ENCODE measurements at regions of chr12 and their contacts with region 1.

Region 1: GRCh38 chr12:122526683-122527477 is at the starts of genes KNTC1 and RSRC2:
- DNase-seq: peak; percentile 99
- ATAC-seq: peak; percentile 92
- H3K4me3 ChIP-seq: peak within 1 kb of the TSS; percentile 69 to 99 (median 97)
- H3K4me3 Mint-ChIP-seq: no peak within 1 kb of the TSS
- H3K27ac ChIP-seq: peak within 1 kb of the TSS; percentile 90 to 97
- H3K27ac Mint-ChIP-seq: no peak within 1 kb of the TSS
- H3K4me1 ChIP-seq: peaks cover 42% of the 10 kb centered on the region in 2 donors
- H3K4me1 Mint-ChIP-seq: peaks cover 35% of the 10 kb centered on the region
- H3K27me3 ChIP-seq: no peaks in the 10 kb centered on the region
- H3K27me3 Mint-ChIP-seq: no peaks in the 10 kb centered on the region
- CTCF ChIP-seq: no peak
- total RNA-seq, gene KNTC1: 49.0 and 52.4 TPM in 2 replicates
- total RNA-seq, gene RSRC2: 151 and 155 TPM in 2 replicates

Region 2: GRCh38 chr12:122265931-122266771 is 260.7 kb before region 1 on chr12 and contains the start of gene VPS33A:
- CTCF ChIA-PET with region 1: no interaction called
- POLR2A ChIA-PET with region 1: no interaction called
- intact Hi-C with region 1: loop called (anchors 1 kb)
- DNase-seq: peak; percentile 96
- ATAC-seq: peak; percentile 82
- H3K4me3 ChIP-seq: peak within 1 kb of the TSS; percentile 70 to 96 (median 91)
- H3K4me3 Mint-ChIP-seq: peak within 1 kb of the TSS; percentile 99
- H3K27ac ChIP-seq: peak within 1 kb of the TSS; percentile 89 to 97
- H3K27ac Mint-ChIP-seq: peak within 1 kb of the TSS; percentile 100
- H3K4me1 ChIP-seq: peaks cover 9 to 14% of the 10 kb centered on the region in 2 donors
- H3K4me1 Mint-ChIP-seq: peaks cover 23% of the 10 kb centered on the region
- H3K27me3 ChIP-seq: no peaks in the 10 kb centered on the region
- H3K27me3 Mint-ChIP-seq: no peaks in the 10 kb centered on the region
- CTCF ChIP-seq: no peak
- total RNA-seq, gene VPS33A: 34.6 and 34.9 TPM in 2 replicates

Region 3: DNA sequence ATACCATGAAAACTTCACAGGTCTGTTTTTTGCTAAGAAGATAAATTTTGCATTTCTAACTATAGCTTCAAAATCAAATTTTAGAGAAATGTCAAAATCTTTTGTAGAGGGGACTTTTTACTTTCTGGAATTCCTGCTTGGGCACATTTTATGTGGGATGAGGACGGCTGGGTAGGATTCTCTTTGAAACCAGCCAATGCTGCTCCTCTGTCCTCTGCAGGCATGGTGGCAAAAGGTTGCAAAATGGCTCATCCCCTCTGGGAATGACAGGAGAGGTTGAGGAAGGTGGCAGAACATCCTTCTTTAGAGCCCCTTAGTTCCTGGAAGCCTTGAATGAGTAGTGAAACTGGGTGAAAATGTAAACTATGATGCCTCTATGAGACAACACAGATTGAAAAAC is 240.8 kb after region 1 on chr12:
- CTCF ChIA-PET with region 1: no interaction called
- POLR2A ChIA-PET with region 1: no interaction called
- intact Hi-C with region 1: loop called (anchors 5 kb)
- DNase-seq: no peak
- ATAC-seq: no peak
- H3K4me3 ChIP-seq: no peak overlapping the region
- H3K4me3 Mint-ChIP-seq: no peak overlapping the region
- H3K27ac ChIP-seq: peak overlapping the region in 1 of 2 donors; percentile 40
- H3K27ac Mint-ChIP-seq: no peak overlapping the region
- H3K4me1 ChIP-seq: no peaks in the 10 kb centered on the region
- H3K4me1 Mint-ChIP-seq: no peaks in the 10 kb centered on the region
- H3K27me3 ChIP-seq: no peaks in the 10 kb centered on the region
- H3K27me3 Mint-ChIP-seq: no peaks in the 10 kb centered on the region
- CTCF ChIP-seq: no peak

Region 4: DNA sequence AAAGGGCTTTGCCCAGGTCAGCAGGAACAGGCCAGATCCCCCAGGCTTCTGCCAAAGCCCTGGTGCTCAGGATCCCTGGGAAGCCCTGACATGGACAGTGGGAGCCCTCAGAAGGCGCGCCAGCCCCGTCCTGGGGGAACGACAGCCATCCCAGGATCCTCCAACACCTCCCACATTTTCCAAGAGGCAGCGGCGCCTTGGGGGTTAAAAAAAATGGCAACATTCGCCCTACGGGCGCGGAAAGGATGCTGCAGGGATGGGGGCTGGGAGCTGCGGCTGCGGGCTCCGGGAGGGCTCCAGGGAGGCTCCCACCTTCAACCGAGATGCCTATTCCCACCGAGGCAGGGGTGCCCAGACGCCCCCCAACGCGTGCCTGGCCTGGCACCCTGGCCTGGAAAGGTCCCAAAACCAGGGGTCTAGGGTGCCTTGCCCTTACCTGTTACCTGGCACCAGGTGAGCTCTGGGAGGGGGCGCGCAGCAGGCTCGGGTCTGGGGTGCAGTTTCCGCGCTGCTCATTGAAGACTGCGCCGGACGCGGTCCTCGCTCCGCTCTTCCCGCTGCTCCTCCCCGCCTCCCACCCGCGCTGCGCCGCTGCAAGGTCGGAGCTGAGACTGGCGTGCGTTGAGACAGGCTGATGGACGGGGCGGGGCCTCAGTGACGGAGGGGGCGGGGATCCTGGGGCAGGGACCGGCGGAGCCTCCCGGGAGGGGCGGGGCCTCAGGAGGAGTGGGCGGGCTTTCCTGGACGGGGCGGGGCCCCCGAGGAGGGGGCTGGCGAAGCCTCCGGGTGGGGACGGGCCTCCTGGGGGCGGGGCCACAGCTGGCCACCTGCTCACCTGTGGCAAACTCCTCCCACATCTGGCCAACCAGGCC is 439.2 kb after region 1 on chr12 and contains the start of gene ABCB9:
- CTCF ChIA-PET with region 1: no interaction called
- POLR2A ChIA-PET with region 1: no interaction called
- intact Hi-C with region 1: loop called (anchors 2 kb)
- DNase-seq: peak; percentile 92
- ATAC-seq: peak; percentile 98
- H3K4me3 ChIP-seq: peak within 1 kb of the TSS in 4 of 5 experiments; percentile 40 to 68 (median 58)
- H3K4me3 Mint-ChIP-seq: peak within 1 kb of the TSS; percentile 83
- H3K27ac ChIP-seq: no peak within 1 kb of the TSS
- H3K27ac Mint-ChIP-seq: peak within 1 kb of the TSS; percentile 46
- H3K4me1 ChIP-seq: peaks cover 8 to 14% of the 10 kb centered on the region in 2 donors
- H3K4me1 Mint-ChIP-seq: peaks cover 6% of the 10 kb centered on the region
- H3K27me3 ChIP-seq: no peaks in the 10 kb centered on the region
- H3K27me3 Mint-ChIP-seq: no peaks in the 10 kb centered on the region
- CTCF ChIP-seq: no peak
- total RNA-seq, gene ABCB9: 2.5 and 3.7 TPM in 2 replicates

Region 5: DNA sequence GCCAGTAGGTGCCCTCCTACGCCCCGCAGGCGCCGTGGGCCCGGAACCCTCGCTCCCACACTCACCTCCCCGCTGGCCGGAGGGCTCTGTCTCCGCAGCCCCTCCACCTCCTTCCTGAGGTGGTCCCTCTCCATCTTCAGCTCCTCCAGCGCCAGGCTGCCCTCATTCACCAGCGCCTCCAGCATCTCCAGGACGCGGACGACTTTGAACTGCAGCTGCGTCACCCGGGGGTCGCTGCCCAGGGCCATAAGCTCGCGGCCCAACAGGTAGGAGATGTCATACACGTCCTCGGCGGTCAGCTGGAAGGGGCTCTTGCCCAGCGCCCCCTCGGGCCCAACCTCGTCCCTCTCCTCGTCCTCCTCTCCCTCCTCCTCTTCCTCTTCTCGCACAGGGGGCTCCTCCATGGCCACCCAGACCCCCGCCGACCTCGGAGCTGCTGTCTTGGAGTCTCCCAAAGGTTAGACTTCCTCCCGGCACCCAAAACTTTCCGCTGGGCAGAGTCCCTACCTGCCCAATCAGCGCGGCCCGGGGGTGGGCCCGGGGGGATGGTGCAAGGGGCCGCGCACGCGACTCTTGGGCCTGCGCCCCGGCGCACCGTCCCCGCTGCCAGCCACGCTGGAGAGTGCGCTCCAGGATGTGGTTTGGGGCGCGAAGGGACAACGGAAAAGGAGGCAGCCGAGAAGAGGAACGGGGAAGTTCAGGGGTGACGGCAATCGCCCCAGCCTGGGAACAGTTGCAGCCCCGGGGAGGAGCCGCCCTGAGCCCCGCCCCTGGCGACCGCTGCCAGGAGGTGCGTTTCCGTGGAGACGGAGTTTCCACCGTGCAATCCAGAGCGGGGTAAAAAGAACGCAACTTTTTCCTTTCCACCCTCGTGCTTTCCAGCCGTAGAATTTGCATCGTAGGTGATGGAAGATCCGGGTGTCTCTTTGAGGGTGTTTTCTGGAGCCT is 909.4 kb after region 1 on chr12 and contains the start of gene RILPL2:
- CTCF ChIA-PET with region 1: no interaction called
- POLR2A ChIA-PET with region 1: interaction called, 10 read pairs
- intact Hi-C with region 1: no loop called
- DNase-seq: peak; percentile 93
- ATAC-seq: peak; percentile 86
- H3K4me3 ChIP-seq: peak within 1 kb of the TSS; percentile 79 to 99 (median 97)
- H3K4me3 Mint-ChIP-seq: peak within 1 kb of the TSS; percentile 96
- H3K27ac ChIP-seq: peak within 1 kb of the TSS; percentile 91 to 95
- H3K27ac Mint-ChIP-seq: peak within 1 kb of the TSS; percentile 96
- H3K4me1 ChIP-seq: peaks cover 30 to 46% of the 10 kb centered on the region in 2 donors
- H3K4me1 Mint-ChIP-seq: peaks cover 47% of the 10 kb centered on the region
- H3K27me3 ChIP-seq: no peaks in the 10 kb centered on the region
- H3K27me3 Mint-ChIP-seq: no peaks in the 10 kb centered on the region
- CTCF ChIP-seq: no peak
- total RNA-seq, gene RILPL2: 12.6 and 13.0 TPM in 2 replicates

Measured in B cell (primary cell).